Activated CD8-positive, alpha-beta T cell treated with anti-CD3 and anti-CD28 coated beads for 36 hours (primary cell): ENCODE measurements at regions of chr20 and their contacts with region 1.

Region 1: DNA sequence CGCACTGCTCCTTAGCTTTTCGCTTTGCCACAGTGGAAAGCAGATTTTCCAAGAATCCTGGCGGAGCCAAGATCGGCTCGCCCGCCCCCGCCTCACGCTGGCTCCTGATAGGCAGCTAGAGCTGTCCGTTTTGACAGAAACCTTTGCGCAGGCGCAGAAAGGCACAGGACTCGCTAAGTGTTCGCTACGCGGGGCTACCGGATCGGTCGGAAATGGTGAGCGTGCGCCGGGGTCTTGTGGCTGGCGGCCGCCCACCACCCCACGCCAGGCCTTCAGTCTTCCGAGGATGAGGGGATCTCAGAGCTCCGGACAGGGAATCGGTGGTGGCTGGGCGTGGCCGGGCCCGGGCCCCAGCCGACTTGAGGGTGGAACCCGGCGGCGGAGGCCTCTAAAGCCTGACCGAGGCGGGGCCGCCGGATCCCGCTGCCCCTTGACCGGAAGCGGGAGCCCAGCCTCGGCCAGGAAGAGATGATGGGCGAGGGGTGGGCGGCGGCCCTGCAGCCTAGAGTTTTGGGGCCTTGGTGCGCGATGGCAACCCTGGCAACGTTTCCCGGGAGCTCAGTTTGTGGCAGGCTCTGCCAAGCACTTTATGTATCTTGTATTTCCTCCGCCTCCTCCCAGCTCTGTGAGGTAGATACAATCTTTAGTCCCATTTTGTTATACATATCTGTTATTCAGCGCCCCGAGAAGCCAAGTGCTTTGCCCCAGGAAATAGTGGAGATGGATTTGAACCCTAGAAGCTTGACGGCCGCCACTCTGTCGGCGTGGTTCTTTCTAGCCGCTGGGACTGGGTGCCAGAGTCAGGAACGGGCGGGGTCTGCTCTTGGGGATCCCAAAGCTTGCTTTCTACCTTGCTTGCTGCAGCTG is at the start of gene DYNLRB1:
- DNase-seq: peak; percentile 98
- ATAC-seq: peak; percentile 82
- H3K4me3 Mint-ChIP-seq: peak within 1 kb of the TSS; percentile 98
- H3K27ac Mint-ChIP-seq: peak within 1 kb of the TSS; percentile 96
- H3K4me1 Mint-ChIP-seq: peaks cover 48% of the 10 kb centered on the region
- H3K27me3 Mint-ChIP-seq: no peaks in the 10 kb centered on the region
- CTCF ChIP-seq: no peak
- total RNA-seq, gene DYNLRB1: 66.6 to 70.9 TPM

Region 2: DNA sequence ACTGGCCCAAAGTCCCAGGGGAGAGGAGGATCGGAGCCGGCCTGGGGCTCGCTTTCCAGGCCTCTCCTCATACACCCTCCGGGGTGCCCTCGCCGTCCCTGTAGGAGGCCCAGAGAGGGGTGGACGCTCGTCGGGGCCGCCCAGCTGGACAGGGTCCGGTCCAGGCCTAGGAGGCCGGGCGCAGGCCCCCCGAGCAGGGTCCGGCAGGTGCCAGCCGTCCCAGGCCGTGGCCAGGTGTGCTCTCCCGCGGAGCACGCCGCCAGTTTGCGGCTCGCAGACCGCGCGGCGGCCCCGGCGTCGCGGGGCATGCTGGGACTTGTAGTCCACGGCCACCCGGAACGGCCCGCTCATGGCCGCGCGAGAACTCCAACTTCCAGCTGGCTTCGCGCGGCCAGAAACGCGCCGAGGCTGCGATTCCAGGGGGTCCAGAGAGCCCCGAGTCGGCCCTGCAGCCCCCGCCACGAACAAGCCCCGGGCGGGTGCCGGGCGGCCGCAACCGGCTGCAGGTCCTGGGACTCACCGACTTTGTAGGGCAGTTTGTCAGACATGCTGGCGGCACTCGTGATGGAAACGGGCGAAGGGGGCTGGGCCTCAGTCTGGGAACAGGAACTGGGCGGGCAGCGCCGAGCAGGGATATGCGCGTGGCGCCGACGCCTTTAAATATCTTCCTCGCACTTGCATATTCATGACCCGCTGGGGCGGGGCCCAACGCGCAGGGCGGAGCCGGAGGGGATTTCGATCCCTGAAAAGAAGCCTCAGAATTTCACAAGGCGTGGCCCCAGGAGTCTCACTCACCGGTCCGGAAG is 213.6 kb before region 1 on chr20 and contains the start of gene AHCY:
- CTCF ChIA-PET with region 1: interaction called, 8 read pairs
- POLR2A ChIA-PET with region 1: interaction called, 11 read pairs
- intact Hi-C with region 1: loop called (anchors 5 kb)
- DNase-seq: peak; percentile 97
- ATAC-seq: peak; percentile 94
- H3K4me3 Mint-ChIP-seq: peak within 1 kb of the TSS; percentile 86
- H3K27ac Mint-ChIP-seq: peak within 1 kb of the TSS; percentile 87
- H3K4me1 Mint-ChIP-seq: peaks cover 20% of the 10 kb centered on the region
- H3K27me3 Mint-ChIP-seq: no peaks in the 10 kb centered on the region
- CTCF ChIP-seq: no peak
- total RNA-seq, gene AHCY: 256 to 258 TPM

Region 3: GRCh38 chr20:34528921-34529297 is 12.4 kb after region 1 on chr20:
- CTCF ChIA-PET with region 1: interaction called, 9 read pairs
- POLR2A ChIA-PET with region 1: interaction called, 14 read pairs
- intact Hi-C with region 1: no loop called
- DNase-seq: no peak
- ATAC-seq: no peak
- H3K4me3 Mint-ChIP-seq: no peak overlapping the region
- H3K27ac Mint-ChIP-seq: no peak overlapping the region
- H3K4me1 Mint-ChIP-seq: peaks cover 6% of the 10 kb centered on the region
- H3K27me3 Mint-ChIP-seq: no peaks in the 10 kb centered on the region
- CTCF ChIP-seq: no peak

Region 4: GRCh38 chr20:34582911-34583310 is 66.4 kb after region 1 on chr20:
- CTCF ChIA-PET with region 1: no interaction called
- POLR2A ChIA-PET with region 1: no interaction called
- intact Hi-C with region 1: no loop called
- DNase-seq: no peak
- ATAC-seq: no peak
- H3K4me3 Mint-ChIP-seq: no peak overlapping the region
- H3K27ac Mint-ChIP-seq: no peak overlapping the region
- H3K4me1 Mint-ChIP-seq: peaks cover 23% of the 10 kb centered on the region
- H3K27me3 Mint-ChIP-seq: no peaks in the 10 kb centered on the region
- CTCF ChIP-seq: no peak